Dendritic cell treated with granulocyte-macrophage colony-stimulating factor and Interleukin-4, amounts not matched to agents 40 ng/mL and 50 ng/mL, for 4 days (primary cell): ENCODE measurements at regions of chr1 and their contacts with region 1.

Region 1: GRCh38 chr1:27489910-27490741 is at the start of gene WASF2:
- H3K4me3 Mint-ChIP-seq: peak within 1 kb of the TSS; percentile 96
- H3K27ac Mint-ChIP-seq: peak within 1 kb of the TSS; percentile 97
- H3K4me1 Mint-ChIP-seq: peaks cover 39% of the 10 kb centered on the region
- H3K27me3 Mint-ChIP-seq: no peaks in the 10 kb centered on the region

Region 2: DNA sequence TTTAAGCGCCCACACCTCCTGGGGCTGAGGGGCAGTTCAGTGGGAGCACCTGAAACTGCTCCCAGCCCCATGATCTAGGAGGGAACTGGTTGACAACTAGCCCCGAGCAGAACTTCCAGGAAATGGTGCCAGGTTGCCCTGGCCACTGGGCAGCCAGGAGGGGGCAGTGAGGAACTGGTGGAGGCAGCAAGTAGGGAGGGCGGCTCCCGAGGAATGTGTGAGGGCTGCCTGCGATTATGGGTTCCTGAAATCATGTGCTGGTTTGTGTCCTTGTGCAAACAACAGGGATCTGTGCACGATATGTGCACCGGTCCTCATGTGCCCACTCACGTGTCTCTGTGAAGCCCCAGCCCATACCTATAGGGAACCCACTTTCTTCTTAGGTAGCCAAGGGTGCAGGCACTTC is 87.8 kb before region 1 on chr1:
- intact Hi-C with region 1: loop called (anchors 1 kb)
- H3K4me3 Mint-ChIP-seq: no peak overlapping the region
- H3K27ac Mint-ChIP-seq: peak overlapping the region; percentile 83
- H3K4me1 Mint-ChIP-seq: peaks cover 56% of the 10 kb centered on the region
- H3K27me3 Mint-ChIP-seq: peaks cover 2% of the 10 kb centered on the region

Region 3: DNA sequence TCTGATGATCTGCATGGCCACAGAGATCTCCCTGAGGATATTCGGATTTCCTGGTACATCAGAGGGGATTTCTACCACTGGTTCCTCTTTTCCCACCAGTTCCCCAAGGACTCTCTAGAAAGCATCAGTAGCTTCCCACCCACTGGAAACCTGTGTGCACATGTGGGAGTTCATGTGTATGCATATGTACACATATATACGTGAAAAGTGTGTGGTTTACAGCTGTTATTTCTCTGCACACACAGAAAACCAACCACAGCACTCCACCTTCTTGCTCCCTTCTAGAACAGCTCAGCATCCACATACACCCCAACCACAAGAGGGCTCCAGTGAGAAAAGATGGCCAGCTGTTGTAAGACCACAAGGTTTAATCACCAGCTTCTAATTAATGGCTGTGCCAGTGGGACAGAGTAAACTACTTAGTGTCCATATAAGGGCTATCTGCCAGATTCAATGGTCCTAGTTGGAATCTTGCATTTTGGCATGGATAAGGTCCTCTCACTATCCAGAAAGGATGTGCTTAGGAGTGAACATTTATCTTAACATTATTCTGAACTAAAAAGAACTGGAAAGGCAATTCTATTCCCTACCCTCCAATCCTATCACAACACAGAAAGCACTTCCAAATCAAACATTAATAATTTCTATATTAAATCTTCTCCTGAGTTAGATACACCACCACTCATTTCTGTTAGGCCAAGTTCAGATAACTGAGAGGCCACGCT is 73.6 kb before region 1 on chr1:
- intact Hi-C with region 1: loop called (anchors 5 kb)
- H3K4me3 Mint-ChIP-seq: no peak overlapping the region
- H3K27ac Mint-ChIP-seq: peak overlapping the region; percentile 53
- H3K4me1 Mint-ChIP-seq: peaks cover 39% of the 10 kb centered on the region
- H3K27me3 Mint-ChIP-seq: no peaks in the 10 kb centered on the region

Region 4: DNA sequence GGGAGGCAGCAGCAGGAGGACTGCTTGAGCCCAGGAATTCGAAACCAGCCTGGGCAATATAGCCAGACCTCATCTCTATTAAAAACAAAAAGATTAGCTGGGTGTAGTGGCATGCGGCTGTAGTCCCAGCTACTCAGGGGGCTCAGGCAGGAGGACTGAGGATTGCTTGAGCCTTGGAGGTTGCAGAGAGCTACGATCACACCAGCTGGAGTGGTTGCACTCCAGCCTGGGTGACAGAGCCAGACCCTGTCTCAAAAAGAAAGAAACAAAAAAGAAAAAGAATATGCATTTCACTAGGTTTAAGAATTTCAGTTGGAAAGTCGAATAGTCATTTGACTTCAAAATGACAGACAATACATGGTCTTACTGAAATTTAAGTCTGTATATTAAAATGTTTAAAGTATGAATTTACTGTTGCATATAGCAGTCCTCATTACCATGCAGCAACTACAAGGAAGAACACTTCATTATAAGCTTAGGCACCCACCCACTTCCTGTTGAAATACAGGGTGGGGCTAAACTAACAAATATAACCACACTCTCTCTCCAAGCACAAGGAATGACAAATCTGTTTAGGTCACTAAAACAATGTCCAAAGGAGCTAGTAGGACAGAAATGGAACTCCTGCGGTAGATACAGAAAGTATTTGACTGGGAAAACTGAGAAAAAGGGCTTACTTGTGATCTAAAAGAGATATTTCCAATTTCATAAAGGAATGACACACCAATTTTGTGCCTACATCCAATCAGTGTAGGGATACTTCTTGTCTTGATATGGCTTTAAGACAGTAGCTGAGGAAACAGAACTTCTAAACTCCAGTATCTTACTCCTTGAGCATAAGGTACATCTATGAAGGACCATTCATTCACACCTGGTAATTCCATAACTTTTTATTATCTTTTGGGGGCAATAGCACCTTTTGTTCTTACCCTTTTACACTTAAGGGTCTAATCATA is 53.6 kb before region 1 on chr1:
- intact Hi-C with region 1: loop called (anchors 5 kb)
- H3K4me3 Mint-ChIP-seq: peak overlapping the region; percentile 67
- H3K27ac Mint-ChIP-seq: peak overlapping the region; percentile 96
- H3K4me1 Mint-ChIP-seq: peaks cover 62% of the 10 kb centered on the region
- H3K27me3 Mint-ChIP-seq: no peaks in the 10 kb centered on the region

Region 5: DNA sequence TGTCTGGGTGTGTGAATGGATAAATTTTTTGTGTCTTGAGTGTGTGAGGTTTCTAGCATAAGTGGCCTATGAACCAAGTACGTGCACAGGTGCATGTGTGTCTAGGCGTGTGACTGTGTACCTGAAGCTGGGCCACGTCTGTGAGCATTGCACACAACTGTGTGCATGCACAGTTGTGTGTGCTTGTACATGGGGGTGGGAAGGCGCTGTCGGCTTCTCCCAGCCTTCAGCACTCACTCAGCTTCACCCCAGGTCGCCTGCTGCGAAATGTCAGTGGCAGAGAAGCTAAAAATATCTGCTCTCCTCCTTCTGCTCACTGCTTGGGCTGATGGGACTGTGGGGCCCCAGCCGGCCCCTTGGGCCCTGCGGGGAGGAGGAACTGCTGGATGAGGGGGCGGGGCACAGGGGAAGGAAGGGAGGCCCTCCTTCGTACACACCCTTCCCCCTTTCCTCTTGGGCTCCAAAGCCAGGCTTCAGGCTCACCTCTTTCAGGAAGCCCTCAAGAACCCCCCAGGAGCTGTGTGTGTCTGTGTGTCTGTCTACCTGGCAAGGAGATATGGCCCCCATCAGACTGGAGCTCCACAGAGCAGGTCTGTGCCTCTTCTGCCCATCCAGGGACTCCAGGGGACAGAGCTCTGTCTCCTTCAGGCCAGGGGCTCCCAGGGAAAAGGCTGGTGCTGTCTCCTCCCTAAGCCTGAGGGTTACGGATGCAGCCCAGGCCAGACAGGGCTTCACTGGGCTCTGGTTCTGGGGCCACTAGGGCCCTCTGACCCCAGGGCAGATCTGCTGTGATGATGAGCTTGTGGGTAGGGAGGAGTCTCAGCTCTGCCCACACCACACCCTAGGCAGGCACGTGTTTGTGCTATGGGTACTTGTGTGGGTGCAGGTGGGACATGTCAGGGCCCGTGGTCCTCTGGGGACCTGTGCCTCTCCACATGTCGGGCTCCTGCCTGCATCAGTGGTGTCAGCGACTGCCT is 35.5 kb after region 1 on chr1:
- intact Hi-C with region 1: loop called (anchors 5 kb)
- H3K4me3 Mint-ChIP-seq: peak overlapping the region; percentile 52
- H3K27ac Mint-ChIP-seq: peak overlapping the region; percentile 77
- H3K4me1 Mint-ChIP-seq: peaks cover 83% of the 10 kb centered on the region
- H3K27me3 Mint-ChIP-seq: peaks cover 34% of the 10 kb centered on the region